Activated B cell treated with CpG ODN at 0.5 μM for 24 hours (primary cell): ENCODE measurements at regions of chr12 and their contacts with region 1.

Region 1: DNA sequence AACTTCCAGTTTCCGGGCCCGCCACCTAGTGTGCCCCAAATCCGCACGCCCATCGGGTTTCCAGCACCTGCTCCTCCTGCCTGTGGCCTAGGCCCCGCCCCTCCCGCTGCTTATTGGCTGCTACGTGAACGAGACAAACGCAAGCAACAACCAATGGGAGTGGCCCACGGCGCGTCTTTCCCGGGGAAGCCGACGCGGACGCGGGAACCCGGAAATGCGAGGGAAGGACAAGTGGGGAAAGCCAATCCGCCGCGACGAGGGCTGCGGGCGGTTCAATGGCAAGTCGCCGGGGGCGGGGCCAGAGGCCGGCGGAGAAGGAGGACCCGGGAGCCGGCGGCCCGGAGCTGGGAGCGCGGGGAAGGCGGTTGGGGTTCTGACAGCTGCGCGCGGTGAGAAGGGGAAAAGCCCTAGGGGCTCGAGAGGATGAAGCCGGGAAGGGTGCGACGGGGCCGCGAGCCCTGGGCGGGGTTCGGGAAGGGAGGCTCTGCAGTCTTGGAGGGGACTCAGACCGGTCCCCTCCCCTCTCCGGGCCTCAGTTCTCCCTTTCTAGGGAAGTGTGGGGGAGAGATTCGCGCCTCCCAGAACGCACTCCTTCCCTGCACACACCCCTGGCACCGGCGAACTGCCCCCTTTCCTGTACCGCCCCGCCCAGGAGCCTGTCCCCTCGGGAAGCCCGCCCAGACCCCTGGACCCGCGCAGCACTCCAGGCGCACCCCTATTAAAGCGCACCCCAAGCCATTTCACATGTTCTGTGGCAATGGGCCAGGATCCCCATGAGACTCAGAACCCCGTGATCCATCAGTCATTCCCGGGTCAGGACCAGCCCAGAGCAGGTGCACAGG is at the start of gene FICD:
- DNase-seq: peak; percentile 92
- ATAC-seq: peak; percentile 92
- H3K4me3 Mint-ChIP-seq: peak within 1 kb of the TSS; percentile 95
- H3K27ac Mint-ChIP-seq: peak within 1 kb of the TSS; percentile 84
- H3K4me1 Mint-ChIP-seq: peaks cover 36% of the 10 kb centered on the region
- H3K27me3 Mint-ChIP-seq: no peaks in the 10 kb centered on the region
- CTCF ChIP-seq: no peak
- total RNA-seq, gene FICD: 7.7 and 11.2 TPM in 2 replicates

Region 2: DNA sequence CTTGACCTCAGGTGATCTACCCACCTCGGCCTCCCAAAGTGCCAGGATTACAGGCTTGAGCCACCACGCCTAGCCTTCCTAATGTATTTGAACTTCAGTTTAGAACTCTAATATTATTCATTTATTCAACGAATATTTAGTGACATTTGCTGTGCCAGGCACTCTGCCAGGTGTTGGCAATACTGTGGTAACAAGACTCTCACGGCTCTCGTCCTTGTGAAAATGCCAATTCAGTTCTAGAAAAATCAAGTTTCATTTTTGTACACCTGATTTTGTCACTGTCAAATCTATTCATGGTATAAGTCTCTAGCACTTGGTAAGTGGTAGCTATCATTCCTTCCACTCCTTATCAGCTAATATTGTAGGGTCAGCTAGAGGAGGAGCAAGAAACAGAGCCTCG is 835.9 kb before region 1 on chr12:
- CTCF ChIA-PET with region 1: no interaction called
- POLR2A ChIA-PET with region 1: no interaction called
- intact Hi-C with region 1: loop called (anchors 2 kb)
- DNase-seq: no peak
- ATAC-seq: no peak
- H3K4me3 Mint-ChIP-seq: no peak overlapping the region
- H3K27ac Mint-ChIP-seq: no peak overlapping the region
- H3K4me1 Mint-ChIP-seq: no peaks in the 10 kb centered on the region
- H3K27me3 Mint-ChIP-seq: peaks cover 11% of the 10 kb centered on the region
- CTCF ChIP-seq: no peak

Region 3: DNA sequence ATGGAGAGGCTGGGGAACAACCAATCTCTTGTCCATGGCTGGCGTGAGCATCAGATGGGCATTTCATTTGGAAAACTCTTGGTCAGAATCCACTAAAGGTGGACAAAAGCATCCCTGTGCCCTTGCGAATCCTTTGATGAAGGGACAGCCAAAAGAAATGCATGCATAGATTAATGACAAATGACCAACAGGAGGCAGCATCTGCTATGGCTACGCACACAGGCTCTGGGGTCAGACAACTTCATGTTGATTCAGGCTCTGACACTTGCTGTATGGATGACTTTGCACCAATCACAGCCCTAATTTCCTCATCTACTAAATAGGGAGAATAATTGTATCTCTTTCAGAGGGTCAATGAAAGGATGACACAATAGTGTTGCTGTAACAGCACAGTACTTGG is 623.2 kb before region 1 on chr12:
- CTCF ChIA-PET with region 1: interaction called, 3 read pairs
- POLR2A ChIA-PET with region 1: no interaction called
- intact Hi-C with region 1: loop called (anchors 5 kb)
- DNase-seq: no peak
- ATAC-seq: no peak
- H3K4me3 Mint-ChIP-seq: no peak overlapping the region
- H3K27ac Mint-ChIP-seq: no peak overlapping the region
- H3K4me1 Mint-ChIP-seq: no peaks in the 10 kb centered on the region
- H3K27me3 Mint-ChIP-seq: peaks cover 6% of the 10 kb centered on the region
- CTCF ChIP-seq: no peak

Region 4: GRCh38 chr12:108063192-108063591 is 452.0 kb before region 1 on chr12:
- CTCF ChIA-PET with region 1: no interaction called
- POLR2A ChIA-PET with region 1: no interaction called
- intact Hi-C with region 1: no loop called
- DNase-seq: no peak
- ATAC-seq: no peak
- H3K4me3 Mint-ChIP-seq: no peak overlapping the region
- H3K27ac Mint-ChIP-seq: no peak overlapping the region
- H3K4me1 Mint-ChIP-seq: no peaks in the 10 kb centered on the region
- H3K27me3 Mint-ChIP-seq: peaks cover 3% of the 10 kb centered on the region
- CTCF ChIP-seq: no peak

Region 5: GRCh38 chr12:108099073-108099472 is 416.1 kb before region 1 on chr12:
- CTCF ChIA-PET with region 1: interaction called, 9 read pairs
- POLR2A ChIA-PET with region 1: no interaction called
- intact Hi-C with region 1: loop called (anchors 1 kb)
- DNase-seq: no peak
- ATAC-seq: peak; percentile 47
- H3K4me3 Mint-ChIP-seq: no peak overlapping the region
- H3K27ac Mint-ChIP-seq: no peak overlapping the region
- H3K4me1 Mint-ChIP-seq: no peaks in the 10 kb centered on the region
- H3K27me3 Mint-ChIP-seq: peaks cover 5% of the 10 kb centered on the region
- CTCF ChIP-seq: no peak

Region 6: GRCh38 chr12:108542320-108542719 is 27.1 kb after region 1 on chr12:
- CTCF ChIA-PET with region 1: no interaction called
- POLR2A ChIA-PET with region 1: interaction called, 3 read pairs
- intact Hi-C with region 1: loop called (anchors 2 kb)
- DNase-seq: no peak
- ATAC-seq: no peak
- H3K4me3 Mint-ChIP-seq: no peak overlapping the region
- H3K27ac Mint-ChIP-seq: peak overlapping the region; percentile 81
- H3K4me1 Mint-ChIP-seq: peaks cover 20% of the 10 kb centered on the region
- H3K27me3 Mint-ChIP-seq: no peaks in the 10 kb centered on the region
- CTCF ChIP-seq: no peak

Region 7: DNA sequence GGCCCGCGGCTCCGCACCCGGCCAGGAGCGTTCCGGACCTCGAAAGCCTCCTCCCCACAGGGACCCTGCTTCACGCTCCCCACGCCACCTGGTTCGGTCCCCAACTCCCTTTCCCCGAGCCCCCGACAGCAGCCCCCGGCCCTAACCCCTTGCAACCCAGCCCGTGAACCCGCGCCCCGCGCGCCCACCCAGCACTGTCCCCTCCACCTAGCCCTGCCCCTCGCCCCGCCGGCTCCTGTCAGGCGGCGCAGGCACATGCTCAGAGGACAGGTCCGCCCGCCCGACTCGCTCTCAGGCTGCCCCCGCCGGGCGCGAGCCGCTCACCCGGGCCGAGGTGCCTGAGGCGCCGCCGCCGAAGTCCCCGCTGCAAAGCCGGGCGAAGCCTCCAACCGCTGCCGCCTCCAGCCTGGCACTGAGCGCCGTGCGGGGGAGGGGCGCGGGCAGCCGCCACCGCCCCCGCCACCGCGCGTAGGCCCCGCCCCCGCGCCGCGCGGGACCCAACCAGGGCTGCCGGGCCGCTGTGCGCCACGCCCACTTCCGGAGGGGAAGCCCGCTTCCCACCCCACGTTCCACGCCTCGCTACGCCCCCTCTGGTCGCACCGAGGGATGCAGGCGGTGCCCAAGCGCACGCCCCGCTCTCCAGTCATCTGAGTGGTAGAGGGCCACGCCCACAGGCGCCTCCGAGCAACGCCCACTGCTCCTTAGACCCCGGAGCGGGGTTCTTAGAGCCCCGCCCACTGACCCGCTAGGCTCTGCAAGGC is 216.1 kb after region 1 on chr12 and contains the start of gene CORO1C:
- CTCF ChIA-PET with region 1: no interaction called
- POLR2A ChIA-PET with region 1: no interaction called
- intact Hi-C with region 1: loop called (anchors 2 kb)
- DNase-seq: peak; percentile 98
- ATAC-seq: peak; percentile 73
- H3K4me3 Mint-ChIP-seq: peak within 1 kb of the TSS; percentile 97
- H3K27ac Mint-ChIP-seq: peak within 1 kb of the TSS; percentile 96
- H3K4me1 Mint-ChIP-seq: peaks cover 48% of the 10 kb centered on the region
- H3K27me3 Mint-ChIP-seq: no peaks in the 10 kb centered on the region
- CTCF ChIP-seq: no peak
- total RNA-seq, gene CORO1C: 68.3 and 69.4 TPM in 2 replicates